B cell (primary cell): ENCODE measurements at regions of chrX and their contacts with region 1.

Region 1: GRCh38 chrX:71095543-71095911 is at the start of gene FOXO4:
- DNase-seq: peak; percentile 87
- ATAC-seq: peak; percentile 85
- H3K4me3 ChIP-seq: peak within 1 kb of the TSS; percentile 49 to 73 (median 61)
- H3K4me3 Mint-ChIP-seq: peak within 1 kb of the TSS; percentile 98
- H3K27ac ChIP-seq: peak within 1 kb of the TSS; percentile 43 to 61
- H3K27ac Mint-ChIP-seq: peak within 1 kb of the TSS; percentile 99
- H3K4me1 ChIP-seq: peaks cover 13 to 28% of the 10 kb centered on the region in 2 donors
- H3K4me1 Mint-ChIP-seq: peaks cover 26% of the 10 kb centered on the region
- H3K27me3 ChIP-seq: no peaks in the 10 kb centered on the region
- H3K27me3 Mint-ChIP-seq: no peaks in the 10 kb centered on the region
- CTCF ChIP-seq: no peak
- total RNA-seq, gene FOXO4: 41.4 and 48.7 TPM in 2 replicates

Region 2: GRCh38 chrX:70970482-70970995 is 125.0 kb before region 1 on chrX:
- CTCF ChIA-PET with region 1: interaction called, 6 read pairs
- POLR2A ChIA-PET with region 1: no interaction called
- intact Hi-C with region 1: loop called (anchors 1 kb)
- DNase-seq: peak; percentile 12
- ATAC-seq: no peak
- H3K4me3 ChIP-seq: peak overlapping the region in 1 of 5 experiments; percentile 9
- H3K4me3 Mint-ChIP-seq: no peak overlapping the region
- H3K27ac ChIP-seq: no peak overlapping the region
- H3K27ac Mint-ChIP-seq: no peak overlapping the region
- H3K4me1 ChIP-seq: peaks cover 0 to 3% of the 10 kb centered on the region in 2 donors
- H3K4me1 Mint-ChIP-seq: peaks cover 3% of the 10 kb centered on the region
- H3K27me3 ChIP-seq: no peaks in the 10 kb centered on the region
- H3K27me3 Mint-ChIP-seq: no peaks in the 10 kb centered on the region
- CTCF ChIP-seq: peak; percentile 35

Region 3: GRCh38 chrX:71068049-71068763 is 27.3 kb before region 1 on chrX and contains the start of gene SNX12:
- CTCF ChIA-PET with region 1: no interaction called
- POLR2A ChIA-PET with region 1: no interaction called
- intact Hi-C with region 1: loop called (anchors 1 kb)
- DNase-seq: peak; percentile 93
- ATAC-seq: peak; percentile 93
- H3K4me3 ChIP-seq: peak within 1 kb of the TSS; percentile 74 to 79 (median 76)
- H3K4me3 Mint-ChIP-seq: peak within 1 kb of the TSS; percentile 96
- H3K27ac ChIP-seq: peak within 1 kb of the TSS; percentile 74 to 85
- H3K27ac Mint-ChIP-seq: peak within 1 kb of the TSS; percentile 96
- H3K4me1 ChIP-seq: peaks cover 0 to 12% of the 10 kb centered on the region in 2 donors
- H3K4me1 Mint-ChIP-seq: peaks cover 17% of the 10 kb centered on the region
- H3K27me3 ChIP-seq: no peaks in the 10 kb centered on the region
- H3K27me3 Mint-ChIP-seq: no peaks in the 10 kb centered on the region
- CTCF ChIP-seq: no peak
- total RNA-seq, gene SNX12: 32.6 and 42.9 TPM in 2 replicates

Region 4: GRCh38 chrX:71111141-71111843 is 15.8 kb after region 1 on chrX and contains the start of gene IL2RG:
- CTCF ChIA-PET with region 1: interaction called, 31 read pairs
- POLR2A ChIA-PET with region 1: interaction called, 29 read pairs
- intact Hi-C with region 1: loop called (anchors 1 kb)
- DNase-seq: peak; percentile 90
- ATAC-seq: peak; percentile 93
- H3K4me3 ChIP-seq: peak within 1 kb of the TSS; percentile 75 to 90 (median 82)
- H3K4me3 Mint-ChIP-seq: peak within 1 kb of the TSS; percentile 98
- H3K27ac ChIP-seq: peak within 1 kb of the TSS; percentile 98
- H3K27ac Mint-ChIP-seq: peak within 1 kb of the TSS; percentile 99
- H3K4me1 ChIP-seq: peaks cover 53 to 65% of the 10 kb centered on the region in 2 donors
- H3K4me1 Mint-ChIP-seq: peaks cover 63% of the 10 kb centered on the region
- H3K27me3 ChIP-seq: no peaks in the 10 kb centered on the region
- H3K27me3 Mint-ChIP-seq: no peaks in the 10 kb centered on the region
- CTCF ChIP-seq: no peak
- total RNA-seq, gene IL2RG: 276 and 297 TPM in 2 replicates

Region 5: DNA sequence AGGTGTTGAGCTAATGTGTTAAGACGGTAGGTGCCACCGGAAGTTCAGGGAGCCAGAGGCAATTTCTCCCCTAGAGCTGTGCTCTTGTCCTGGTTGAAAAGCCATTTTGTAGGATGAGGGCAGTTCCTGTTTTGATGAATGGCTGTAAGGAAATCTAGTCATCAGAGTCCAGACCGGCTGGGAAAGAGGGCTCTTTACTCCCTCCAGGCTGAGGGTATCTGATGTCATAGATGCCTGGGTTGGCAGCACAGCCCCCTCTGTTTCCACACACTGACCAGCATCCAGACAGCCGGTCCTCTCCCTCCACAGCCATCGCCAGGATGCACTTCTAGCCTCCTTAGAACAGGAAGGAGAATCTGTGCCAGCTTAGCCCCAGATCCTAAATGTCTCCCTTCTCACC is 56.4 kb after region 1 on chrX:
- CTCF ChIA-PET with region 1: no interaction called
- POLR2A ChIA-PET with region 1: no interaction called
- intact Hi-C with region 1: no loop called
- DNase-seq: no peak
- ATAC-seq: no peak
- H3K4me3 ChIP-seq: no peak overlapping the region
- H3K4me3 Mint-ChIP-seq: no peak overlapping the region
- H3K27ac ChIP-seq: no peak overlapping the region
- H3K27ac Mint-ChIP-seq: no peak overlapping the region
- H3K4me1 ChIP-seq: peaks cover 0 to 6% of the 10 kb centered on the region in 2 donors
- H3K4me1 Mint-ChIP-seq: peaks cover 14% of the 10 kb centered on the region
- H3K27me3 ChIP-seq: no peaks in the 10 kb centered on the region
- H3K27me3 Mint-ChIP-seq: no peaks in the 10 kb centered on the region
- CTCF ChIP-seq: no peak